Vagina (tissue), 2 donors: ENCODE measurements at regions of chr4 and their contacts with region 1.

Region 1: DNA sequence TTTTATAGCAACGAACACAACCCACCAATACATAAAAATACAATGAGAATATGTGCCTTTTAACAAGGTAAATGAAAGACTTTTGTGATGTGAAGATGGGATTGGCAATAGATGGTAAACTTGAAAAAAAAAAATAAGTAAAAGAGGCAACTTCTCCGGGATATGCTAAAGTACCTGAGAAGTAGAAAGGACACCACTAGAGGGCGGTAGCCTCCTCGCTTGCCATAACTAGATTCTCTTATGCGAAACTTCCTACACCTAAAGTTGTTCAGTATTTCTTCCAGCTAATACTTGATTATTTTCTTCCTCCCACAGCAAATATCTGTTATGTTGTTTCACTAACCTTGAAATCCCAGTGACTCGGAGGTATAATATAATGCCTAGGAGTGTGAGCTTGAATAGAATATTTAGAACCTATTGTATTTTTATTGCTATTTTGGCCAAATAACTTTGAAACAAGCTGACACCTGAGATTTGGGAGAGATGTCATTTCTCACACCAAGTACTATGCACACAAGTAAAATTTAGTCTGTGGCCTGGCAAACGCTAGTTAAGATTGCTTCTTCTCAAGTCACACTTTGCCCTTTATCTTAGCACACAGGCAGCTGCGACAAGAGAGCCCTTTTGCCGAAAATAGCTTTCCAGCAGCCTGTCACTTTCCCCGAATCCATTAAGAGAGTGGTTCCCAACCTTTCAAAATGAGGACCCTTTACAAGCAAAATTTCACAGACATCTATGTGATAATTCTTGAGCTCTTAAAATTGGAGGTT is 44.9 kb upstream of the PDLIM5 start:
- DNase-seq: no peak
- H3K4me3 ChIP-seq: no peak overlapping the region
- H3K27ac ChIP-seq: no peak overlapping the region
- H3K4me1 ChIP-seq: no peaks in the 10 kb centered on the region
- H3K27me3 ChIP-seq: no peaks in the 10 kb centered on the region
- CTCF ChIP-seq: peak; percentile 67 to 75 (median 71)
- POLR2A ChIP-seq: no peak

Region 2: GRCh38 chr4:94428884-94429557 is 22.2 kb after region 1 on chr4:
- intact Hi-C with region 1: no loop called
- DNase-seq: no peak
- H3K4me3 ChIP-seq: no peak overlapping the region
- H3K27ac ChIP-seq: no peak overlapping the region
- H3K4me1 ChIP-seq: no peaks in the 10 kb centered on the region
- H3K27me3 ChIP-seq: no peaks in the 10 kb centered on the region
- CTCF ChIP-seq: no peak
- POLR2A ChIP-seq: no peak

Region 3: GRCh38 chr4:94516067-94516466 is 109.2 kb after region 1 on chr4:
- intact Hi-C with region 1: loop called (anchors 10 kb)
- DNase-seq: no peak
- H3K4me3 ChIP-seq: no peak overlapping the region
- H3K27ac ChIP-seq: no peak overlapping the region
- H3K4me1 ChIP-seq: peaks cover 51% of the 10 kb centered on the region
- H3K27me3 ChIP-seq: no peaks in the 10 kb centered on the region
- CTCF ChIP-seq: no peak
- POLR2A ChIP-seq: no peak

Region 4: GRCh38 chr4:94595879-94596483 is 189.1 kb after region 1 on chr4:
- intact Hi-C with region 1: loop called (anchors 5 kb)
- DNase-seq: no peak
- H3K4me3 ChIP-seq: no peak overlapping the region
- H3K27ac ChIP-seq: no peak overlapping the region
- H3K4me1 ChIP-seq: no peaks in the 10 kb centered on the region
- H3K27me3 ChIP-seq: no peaks in the 10 kb centered on the region
- CTCF ChIP-seq: peak; percentile 36 to 64 (median 54)
- POLR2A ChIP-seq: no peak

Region 5: GRCh38 chr4:96407738-96408231 is 2000.9 kb after region 1 on chr4:
- intact Hi-C with region 1: no loop called
- DNase-seq: no peak
- H3K4me3 ChIP-seq: no peak overlapping the region
- H3K27ac ChIP-seq: no peak overlapping the region
- H3K4me1 ChIP-seq: no peaks in the 10 kb centered on the region
- H3K27me3 ChIP-seq: no peaks in the 10 kb centered on the region
- CTCF ChIP-seq: no peak
- POLR2A ChIP-seq: no peak